ENCODE measurements at regions of chr1 and their contacts with region 1.

Region 1: GRCh38 chr1:30379684-30380624 is 343.4 kb downstream of the MATN1 start:
- DNase-seq: peak; percentile 56
- ATAC-seq: peak; percentile 34
- H3K4me3 Mint-ChIP-seq: no peak overlapping the region
- H3K27ac Mint-ChIP-seq: no peak overlapping the region
- H3K4me1 Mint-ChIP-seq: peaks cover 2% of the 10 kb centered on the region
- H3K27me3 Mint-ChIP-seq: peaks cover 17% of the 10 kb centered on the region
- CTCF ChIP-seq: peak; percentile 71

Region 2: DNA sequence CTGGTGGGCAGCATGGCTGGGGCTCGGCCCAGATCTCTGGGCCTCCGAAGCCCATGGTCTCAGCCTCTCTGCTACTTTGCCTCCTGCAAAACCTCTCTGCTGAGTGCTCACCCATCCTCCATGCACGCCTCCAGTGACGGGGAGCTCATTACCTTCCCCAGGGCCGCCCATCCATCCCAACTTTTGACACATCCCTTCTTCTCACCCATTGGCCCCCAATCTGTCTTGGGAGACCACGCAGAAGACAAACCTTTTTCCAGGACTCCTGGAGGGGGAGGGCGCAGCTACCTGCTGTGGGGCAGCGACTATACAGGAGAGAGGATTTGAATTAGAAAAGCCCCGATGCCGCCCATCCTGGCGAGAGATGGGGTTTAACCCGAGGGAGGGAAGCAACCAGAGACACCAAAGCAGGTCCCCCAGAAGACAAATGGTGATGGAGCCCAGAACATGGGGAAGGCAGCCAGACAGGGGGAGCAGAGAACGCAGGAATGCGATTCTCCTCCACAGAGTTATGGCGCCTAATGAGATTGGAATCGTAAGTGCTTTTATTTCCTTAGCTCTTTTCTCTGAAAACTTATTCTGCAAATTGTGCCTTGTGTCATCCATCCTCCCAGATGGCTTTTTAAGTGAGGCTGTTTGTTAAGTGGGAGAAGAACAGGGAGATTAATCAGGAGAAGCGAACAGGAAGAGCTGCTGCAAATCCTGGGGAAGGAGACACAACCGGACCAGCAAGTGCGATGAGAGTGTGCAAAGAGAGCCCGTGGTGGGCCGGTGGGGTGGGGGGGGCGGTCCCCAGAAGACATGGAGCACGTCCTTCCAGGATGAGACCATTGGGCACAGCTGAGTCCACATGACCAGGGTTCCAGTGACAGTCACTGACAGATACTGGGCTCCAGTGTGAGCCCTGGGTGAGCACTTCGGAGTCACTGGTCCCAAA is 280.1 kb before region 1 on chr1:
- CTCF ChIA-PET with region 1: no interaction called
- POLR2A ChIA-PET with region 1: no interaction called
- intact Hi-C with region 1: no loop called
- DNase-seq: no peak
- ATAC-seq: no peak
- H3K4me3 Mint-ChIP-seq: no peak overlapping the region
- H3K27ac Mint-ChIP-seq: no peak overlapping the region
- H3K4me1 Mint-ChIP-seq: no peaks in the 10 kb centered on the region
- H3K27me3 Mint-ChIP-seq: no peaks in the 10 kb centered on the region
- CTCF ChIP-seq: no peak

Region 3: GRCh38 chr1:30368651-30369240 is 11.2 kb before region 1 on chr1:
- CTCF ChIA-PET with region 1: interaction called, 26 read pairs
- POLR2A ChIA-PET with region 1: interaction called, 3 read pairs
- intact Hi-C with region 1: no loop called
- DNase-seq: no peak
- ATAC-seq: no peak
- H3K4me3 Mint-ChIP-seq: no peak overlapping the region
- H3K27ac Mint-ChIP-seq: no peak overlapping the region
- H3K4me1 Mint-ChIP-seq: no peaks in the 10 kb centered on the region
- H3K27me3 Mint-ChIP-seq: peaks cover 8% of the 10 kb centered on the region
- CTCF ChIP-seq: no peak